ENCODE measurements at regions of chr19 and their contacts with region 1.

Region 1: DNA sequence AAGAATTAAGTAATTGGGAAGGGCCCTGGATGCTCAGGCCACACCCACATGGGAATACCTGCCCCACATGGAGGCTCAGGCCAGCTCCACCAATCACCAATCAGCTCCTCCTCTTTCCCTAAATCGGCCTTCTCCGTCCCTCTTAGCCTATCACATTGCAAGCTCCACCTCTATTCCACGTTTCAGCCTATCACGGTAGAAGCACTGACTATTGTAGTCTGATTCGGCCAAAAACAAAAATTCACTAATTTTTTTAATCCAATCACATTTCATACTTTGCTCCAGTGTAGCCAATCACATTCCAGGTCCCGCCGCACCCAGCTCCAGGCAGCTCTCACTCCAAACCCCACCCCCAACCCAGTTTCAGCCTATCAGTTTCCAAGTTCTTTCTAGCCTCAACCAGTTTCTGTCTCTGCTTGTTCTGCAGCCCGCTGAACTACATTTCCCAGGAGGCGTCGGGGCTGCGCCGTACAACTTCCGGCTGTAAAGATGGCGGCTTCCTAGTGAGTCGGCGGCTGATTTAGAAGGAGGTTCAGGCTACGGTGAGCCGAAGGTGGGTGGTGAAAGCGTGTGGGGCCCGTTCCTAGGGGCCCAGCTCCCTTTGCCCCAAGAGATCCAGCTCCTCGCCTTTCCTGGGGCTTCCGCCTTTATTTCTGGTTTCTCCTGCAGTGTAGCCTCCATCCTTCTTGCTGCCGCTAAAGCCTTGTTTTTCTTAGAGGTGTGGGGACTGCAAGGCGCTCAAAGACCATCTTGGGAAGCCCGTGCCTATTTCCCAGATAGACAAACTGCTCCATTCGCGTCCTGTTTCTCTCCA is at the start of gene BABAM1:
- DNase-seq: peak; percentile 81
- ATAC-seq: peak; percentile 89
- H3K4me3 Mint-ChIP-seq: peak within 1 kb of the TSS; percentile 91
- H3K27ac Mint-ChIP-seq: peak within 1 kb of the TSS; percentile 93
- H3K4me1 Mint-ChIP-seq: peaks cover 29% of the 10 kb centered on the region
- H3K27me3 Mint-ChIP-seq: no peaks in the 10 kb centered on the region
- CTCF ChIP-seq: no peak
- total RNA-seq, gene BABAM1: 121 and 135 TPM in 2 replicates

Region 2: DNA sequence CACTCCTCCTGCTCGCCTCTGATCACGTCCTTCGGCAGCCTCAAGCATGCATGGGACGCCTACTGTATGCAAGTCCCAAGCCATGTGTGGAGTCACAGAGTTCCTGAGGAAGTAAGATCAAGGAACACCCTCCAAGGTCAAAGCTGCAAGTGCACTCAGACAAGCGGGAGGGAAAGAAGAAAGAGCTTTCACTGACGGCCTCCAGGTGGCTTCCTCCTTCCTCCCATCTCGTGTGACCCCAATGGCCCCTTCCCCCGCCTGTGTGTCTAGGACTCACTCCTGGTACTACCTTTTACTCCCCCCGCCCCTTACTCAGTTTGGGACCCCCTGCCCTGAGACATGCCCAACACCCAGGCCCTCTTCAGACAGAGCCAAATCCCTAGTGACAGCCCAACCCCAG is 198.0 kb before region 1 on chr19:
- CTCF ChIA-PET with region 1: no interaction called
- POLR2A ChIA-PET with region 1: interaction called, 5 read pairs
- intact Hi-C with region 1: loop called (anchors 2 kb)
- DNase-seq: no peak
- ATAC-seq: no peak
- H3K4me3 Mint-ChIP-seq: no peak overlapping the region
- H3K27ac Mint-ChIP-seq: no peak overlapping the region
- H3K4me1 Mint-ChIP-seq: peaks cover 57% of the 10 kb centered on the region
- H3K27me3 Mint-ChIP-seq: no peaks in the 10 kb centered on the region
- CTCF ChIP-seq: no peak

Region 3: DNA sequence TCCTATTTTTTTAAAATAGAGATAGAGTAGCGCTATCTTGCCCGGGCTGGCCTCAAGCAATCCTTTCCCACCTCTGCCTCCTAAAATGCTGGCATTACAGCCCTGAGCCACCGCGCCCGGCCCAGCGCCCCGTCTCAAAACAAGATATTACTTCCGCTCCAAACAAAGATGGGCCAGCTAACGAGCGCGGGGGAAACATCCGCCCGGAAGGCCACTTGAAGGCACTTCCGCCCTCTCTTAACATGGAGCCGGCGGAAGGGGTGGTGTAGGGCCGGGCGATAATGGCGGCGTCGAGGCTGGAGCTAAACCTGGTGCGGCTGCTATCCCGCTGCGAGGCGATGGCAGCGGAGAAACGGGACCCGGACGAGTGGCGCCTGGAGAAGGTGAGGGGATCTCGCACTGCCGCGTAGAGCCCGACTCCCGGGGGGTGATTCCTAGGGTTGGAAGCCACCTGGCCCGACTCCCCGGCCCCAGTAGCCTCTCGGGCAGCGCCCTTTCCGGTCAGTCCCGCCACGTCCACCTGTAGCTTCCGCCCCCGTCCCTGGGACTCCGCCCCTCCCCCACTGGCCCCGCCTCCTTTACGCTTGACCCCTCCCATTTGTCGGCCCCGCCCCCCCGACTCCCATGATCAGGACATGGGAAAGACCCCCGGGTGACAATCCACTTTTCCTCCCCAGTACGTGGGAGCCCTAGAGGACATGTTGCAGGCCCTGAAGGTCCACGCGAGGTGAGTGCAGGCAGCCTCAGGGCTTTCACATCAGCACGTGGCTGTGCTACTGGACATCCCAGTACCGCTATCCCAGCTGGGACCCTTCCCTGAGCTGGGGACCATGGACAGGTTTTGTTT is 51.8 kb before region 1 on chr19 and contains the start of gene USE1:
- CTCF ChIA-PET with region 1: no interaction called
- POLR2A ChIA-PET with region 1: interaction called, 21 read pairs
- intact Hi-C with region 1: loop called (anchors 1 kb)
- DNase-seq: peak; percentile 73
- ATAC-seq: peak; percentile 92
- H3K4me3 Mint-ChIP-seq: peak within 1 kb of the TSS; percentile 91
- H3K27ac Mint-ChIP-seq: peak within 1 kb of the TSS; percentile 96
- H3K4me1 Mint-ChIP-seq: peaks cover 19% of the 10 kb centered on the region
- H3K27me3 Mint-ChIP-seq: no peaks in the 10 kb centered on the region
- CTCF ChIP-seq: no peak
- total RNA-seq, gene USE1: 41.9 and 43.4 TPM in 2 replicates

Region 4: DNA sequence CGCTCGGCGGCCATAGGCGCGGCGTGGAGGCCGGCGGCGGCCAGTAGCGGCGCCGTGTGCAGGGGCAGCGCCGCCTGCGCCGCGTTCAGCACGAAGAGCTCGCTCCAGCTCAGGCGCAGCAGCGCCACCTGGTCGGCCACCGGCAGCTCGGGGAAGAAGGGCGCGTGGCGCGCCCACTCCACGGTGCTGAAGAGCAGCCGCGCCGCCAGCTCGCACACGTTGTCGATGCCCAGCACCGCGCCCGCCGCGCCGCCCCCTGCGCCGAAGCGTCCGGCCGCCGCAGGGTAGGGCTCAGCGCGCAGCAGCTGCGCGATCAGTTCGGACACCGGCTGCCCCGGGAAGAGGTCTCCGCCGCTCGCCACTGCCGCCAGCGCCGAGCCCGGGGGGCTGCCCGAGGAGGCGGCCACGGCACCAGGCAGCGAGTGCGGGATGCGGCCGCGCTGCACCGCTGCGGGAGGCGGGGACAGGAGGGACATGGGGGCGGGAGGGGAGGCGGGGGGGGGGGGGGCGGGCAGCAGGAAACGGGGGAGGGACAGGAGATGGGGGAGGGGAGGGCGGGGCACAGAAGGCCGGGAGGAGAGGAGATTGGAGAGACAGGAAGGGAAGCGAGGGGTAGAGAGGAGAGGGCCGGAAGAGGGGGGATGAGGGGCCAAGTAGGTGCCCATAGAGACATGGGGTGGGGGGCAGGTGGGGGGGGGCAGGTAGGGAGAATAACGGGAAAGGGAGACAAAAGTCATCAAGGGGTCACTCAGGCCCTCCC is 31.4 kb before region 1 on chr19:
- CTCF ChIA-PET with region 1: interaction called, 4 read pairs
- POLR2A ChIA-PET with region 1: interaction called, 3 read pairs
- intact Hi-C with region 1: loop called (anchors 2 kb)
- DNase-seq: peak; percentile 66
- ATAC-seq: peak; percentile 90
- H3K4me3 Mint-ChIP-seq: peak overlapping the region; percentile 82
- H3K27ac Mint-ChIP-seq: no peak overlapping the region
- H3K4me1 Mint-ChIP-seq: peaks cover 9% of the 10 kb centered on the region
- H3K27me3 Mint-ChIP-seq: no peaks in the 10 kb centered on the region
- CTCF ChIP-seq: no peak

Region 5: DNA sequence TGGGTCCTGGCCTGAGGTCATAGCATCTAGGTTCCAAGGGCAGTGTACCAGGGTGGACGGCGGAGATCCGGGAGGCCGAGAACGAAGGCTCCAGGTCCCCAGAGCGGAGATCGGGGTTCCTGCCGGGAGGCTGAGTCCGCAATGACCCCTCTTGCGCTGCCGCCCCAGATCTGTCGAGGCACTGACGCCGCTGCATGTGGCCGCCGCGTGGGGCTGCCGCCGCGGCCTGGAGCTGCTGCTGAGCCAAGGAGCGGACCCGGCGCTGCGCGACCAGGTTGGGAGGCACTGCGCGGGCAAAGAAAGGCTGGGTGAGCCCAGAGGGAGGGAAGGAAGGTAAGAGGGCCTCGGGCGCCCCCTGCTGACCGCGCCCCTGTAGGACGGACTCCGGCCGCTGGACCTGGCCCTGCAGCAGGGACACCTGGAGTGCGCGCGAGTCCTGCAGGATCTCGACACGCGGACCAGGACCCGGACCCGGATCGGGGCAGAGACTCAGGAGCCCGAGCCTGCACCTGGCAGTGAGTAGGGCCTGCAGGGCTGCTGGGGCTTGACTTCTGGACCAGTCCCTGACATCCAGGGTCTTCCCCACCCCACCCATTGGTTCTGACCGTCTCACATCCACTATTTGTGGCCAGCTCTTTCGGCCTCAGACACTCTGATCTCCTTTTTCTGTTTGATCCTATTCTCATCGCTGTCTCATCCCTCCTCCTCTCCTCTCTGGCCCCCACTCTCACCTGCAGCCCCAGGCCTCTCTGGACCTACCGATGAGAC is 15.5 kb after region 1 on chr19:
- CTCF ChIA-PET with region 1: interaction called, 5 read pairs
- POLR2A ChIA-PET with region 1: interaction called, 40 read pairs
- intact Hi-C with region 1: loop called (anchors 2 kb)
- DNase-seq: peak; percentile 79
- ATAC-seq: peak; percentile 84
- H3K4me3 Mint-ChIP-seq: peak overlapping the region; percentile 85
- H3K27ac Mint-ChIP-seq: no peak overlapping the region
- H3K4me1 Mint-ChIP-seq: peaks cover 12% of the 10 kb centered on the region
- H3K27me3 Mint-ChIP-seq: no peaks in the 10 kb centered on the region
- CTCF ChIP-seq: peak; percentile 52

Region 6: DNA sequence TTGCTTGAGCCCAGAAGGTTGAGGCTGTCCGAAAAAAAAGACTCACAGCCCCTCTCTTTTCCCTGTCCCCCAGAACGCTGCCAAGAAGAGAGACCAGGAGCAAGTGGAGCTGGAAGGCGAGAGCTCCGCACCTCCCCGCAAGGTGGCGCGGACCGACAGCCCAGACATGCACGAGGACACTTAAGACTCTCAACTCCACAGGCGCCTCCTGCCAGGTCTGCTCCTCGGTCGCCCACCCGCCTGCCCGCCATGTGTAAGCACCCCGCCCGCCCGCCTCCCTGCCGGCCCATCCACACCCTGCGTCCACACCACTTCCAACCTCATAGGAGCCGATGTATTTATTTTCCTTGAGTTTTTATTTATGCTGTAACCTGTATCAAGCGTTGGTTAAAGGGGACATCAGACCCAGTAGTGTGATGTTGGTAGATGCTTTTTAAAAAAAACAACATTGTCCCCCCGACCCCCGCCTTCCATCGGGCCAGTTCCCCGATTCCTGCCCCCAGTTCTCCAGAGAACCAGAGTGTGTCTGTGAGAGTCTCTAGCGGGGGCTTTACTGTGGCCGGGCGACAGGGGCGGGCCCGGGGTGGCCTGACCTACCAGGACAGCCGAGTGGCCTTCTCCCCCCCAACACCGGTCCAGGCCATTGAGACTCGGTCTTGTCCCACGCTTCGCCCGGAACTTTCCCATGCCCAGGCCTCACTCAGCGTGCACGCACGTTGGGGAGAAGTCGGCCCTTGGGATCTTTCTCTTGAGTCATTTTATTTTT is 52.5 kb after region 1 on chr19:
- CTCF ChIA-PET with region 1: no interaction called
- POLR2A ChIA-PET with region 1: no interaction called
- intact Hi-C with region 1: no loop called
- DNase-seq: no peak
- ATAC-seq: no peak
- H3K4me3 Mint-ChIP-seq: no peak overlapping the region
- H3K27ac Mint-ChIP-seq: no peak overlapping the region
- H3K4me1 Mint-ChIP-seq: peaks cover 4% of the 10 kb centered on the region
- H3K27me3 Mint-ChIP-seq: no peaks in the 10 kb centered on the region
- CTCF ChIP-seq: no peak

Measured in activated B cell treated with CpG ODN at 0.5 μM for 24 hours (primary cell).